H1 (cell line): ENCODE measurements at regions of chr4 and their contacts with region 1.

Region 1: GRCh38 chr4:21452931-21453330 is 495.6 kb downstream of the KCNIP4 start:
- DNase-seq: no peak
- H3K4me3 ChIP-seq: no peak overlapping the region
- H3K27ac ChIP-seq: no peak overlapping the region
- H3K4me1 ChIP-seq: no peaks in the 10 kb centered on the region
- H3K27me3 ChIP-seq: no peaks in the 10 kb centered on the region
- CTCF ChIP-seq: no peak
- EP300 ChIP-seq: no peak
- POLR2A ChIP-seq: no peak
- RAD21 ChIP-seq: no peak

Region 2: DNA sequence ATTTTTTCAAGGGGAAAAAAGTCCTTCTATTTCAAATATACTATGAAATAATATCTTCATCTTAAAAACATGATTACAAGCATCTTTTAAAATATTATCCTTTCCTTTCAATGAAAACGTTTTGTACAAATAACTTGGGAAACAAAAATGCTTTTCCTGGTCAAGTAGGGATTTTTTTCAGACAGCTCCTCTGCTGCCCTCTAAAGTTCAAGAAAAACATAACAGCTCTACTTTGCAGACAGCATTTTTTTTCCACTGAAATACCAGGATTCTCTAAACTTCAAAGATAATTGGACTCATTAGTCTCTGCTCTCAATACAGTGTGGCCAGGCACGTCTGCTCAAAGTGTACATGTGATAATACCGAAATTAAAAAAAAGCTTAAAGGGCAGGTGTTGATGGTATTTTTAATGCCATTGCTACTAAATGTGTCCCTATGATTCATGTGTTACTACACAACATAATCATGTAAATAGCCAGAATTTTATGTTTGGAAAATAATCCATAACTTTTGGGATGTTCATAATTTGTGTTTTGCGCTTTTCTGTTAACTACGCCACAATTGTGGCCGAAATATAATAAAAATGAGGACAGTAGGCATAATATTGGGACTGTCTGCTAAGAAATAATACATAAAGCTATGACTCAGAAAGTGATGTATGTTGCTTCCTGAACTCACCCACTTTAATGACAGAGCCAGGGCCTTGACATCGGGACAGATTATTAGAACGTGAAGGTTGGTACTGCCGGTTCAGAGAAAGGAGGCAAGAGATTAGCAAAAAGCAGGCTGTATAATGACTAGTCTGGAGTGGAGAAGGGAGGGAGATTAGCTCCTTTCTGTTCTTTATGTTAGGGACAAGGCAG is 16.7 kb after region 1 on chr4:
- CTCF ChIA-PET with region 1: interaction called, 24 read pairs
- POLR2A ChIA-PET with region 1: no interaction called
- DNase-seq: no peak
- H3K4me3 ChIP-seq: no peak overlapping the region
- H3K27ac ChIP-seq: no peak overlapping the region
- H3K4me1 ChIP-seq: no peaks in the 10 kb centered on the region
- H3K27me3 ChIP-seq: no peaks in the 10 kb centered on the region
- CTCF ChIP-seq: peak in 2 of 3 experiments; percentile 37 to 53; a peak in 2 of 4 replicates
- EP300 ChIP-seq: no peak
- POLR2A ChIP-seq: no peak
- RAD21 ChIP-seq: peak; percentile 71 to 76